ENCODE measurements at regions of chr22 and their contacts with region 1.

Region 1: GRCh38 chr22:36449596-36450175 is 31.8 kb downstream of the TXN2 start:
- DNase-seq: no peak
- H3K4me3 Mint-ChIP-seq: no peak overlapping the region
- H3K27ac Mint-ChIP-seq: peak overlapping the region; percentile 45
- H3K4me1 Mint-ChIP-seq: peaks cover 39% of the 10 kb centered on the region
- H3K27me3 Mint-ChIP-seq: no peaks in the 10 kb centered on the region

Region 2: GRCh38 chr22:36419177-36419911 is 30.3 kb before region 1 on chr22:
- intact Hi-C with region 1: no loop called
- DNase-seq: peak; percentile 64
- H3K4me3 Mint-ChIP-seq: peak overlapping the region; percentile 13
- H3K27ac Mint-ChIP-seq: peak overlapping the region; percentile 1
- H3K4me1 Mint-ChIP-seq: peaks cover 22% of the 10 kb centered on the region
- H3K27me3 Mint-ChIP-seq: no peaks in the 10 kb centered on the region

Region 3: GRCh38 chr22:36439481-36440271 is 10.0 kb before region 1 on chr22:
- intact Hi-C with region 1: loop called (anchors 2 kb)
- DNase-seq: no peak
- H3K4me3 Mint-ChIP-seq: no peak overlapping the region
- H3K27ac Mint-ChIP-seq: no peak overlapping the region
- H3K4me1 Mint-ChIP-seq: peaks cover 32% of the 10 kb centered on the region
- H3K27me3 Mint-ChIP-seq: no peaks in the 10 kb centered on the region

Measured in activated CD4-positive, alpha-beta T cell treated with anti-CD3 and anti-CD28 coated beads, Interleukin-2, amount 10 ng/mL, durations not matched to agents 24 days and 14 days (primary cell).